ENCODE measurements at regions of chr10 and their contacts with region 1.

Region 1: GRCh38 chr10:8289241-8289924 is 234.9 kb downstream of the GATA3 start:
- DNase-seq: no peak
- CTCF ChIP-seq: no peak

Region 2: DNA sequence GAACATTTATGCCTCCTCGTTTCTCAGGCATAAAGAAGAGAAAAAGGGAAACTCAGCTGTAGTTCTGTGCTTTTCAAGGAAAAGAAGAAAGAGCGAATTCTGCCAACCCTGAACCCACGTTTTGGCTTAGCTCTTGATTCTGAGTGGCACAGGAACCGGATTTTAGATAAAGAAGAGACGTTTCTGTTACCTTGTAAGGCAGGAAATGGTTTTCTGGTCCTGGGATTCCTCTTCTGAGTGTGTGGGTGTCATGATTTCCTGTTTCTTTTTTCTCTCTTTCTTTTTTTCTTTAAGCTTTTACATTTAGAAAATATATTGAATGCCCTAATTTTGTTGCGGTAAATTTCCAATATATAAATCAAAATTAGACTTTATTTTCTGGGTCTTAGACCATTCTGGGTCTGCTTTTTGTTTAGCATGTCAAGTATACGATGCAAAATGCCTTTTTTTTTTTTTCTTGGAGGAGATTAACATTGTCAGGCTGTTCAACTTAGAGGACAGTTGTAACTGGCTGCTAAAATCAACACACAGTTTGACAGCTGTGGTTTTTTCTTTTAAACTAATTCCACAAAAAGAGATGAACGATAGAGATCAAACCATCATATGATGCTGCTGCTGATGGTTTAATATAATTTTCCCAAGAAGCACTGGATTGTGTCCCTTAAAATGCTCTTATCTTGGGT is 44.1 kb before region 1 on chr10:
- CTCF ChIA-PET with region 1: no interaction called
- POLR2A ChIA-PET with region 1: no interaction called
- DNase-seq: no peak
- CTCF ChIP-seq: no peak

Region 3: DNA sequence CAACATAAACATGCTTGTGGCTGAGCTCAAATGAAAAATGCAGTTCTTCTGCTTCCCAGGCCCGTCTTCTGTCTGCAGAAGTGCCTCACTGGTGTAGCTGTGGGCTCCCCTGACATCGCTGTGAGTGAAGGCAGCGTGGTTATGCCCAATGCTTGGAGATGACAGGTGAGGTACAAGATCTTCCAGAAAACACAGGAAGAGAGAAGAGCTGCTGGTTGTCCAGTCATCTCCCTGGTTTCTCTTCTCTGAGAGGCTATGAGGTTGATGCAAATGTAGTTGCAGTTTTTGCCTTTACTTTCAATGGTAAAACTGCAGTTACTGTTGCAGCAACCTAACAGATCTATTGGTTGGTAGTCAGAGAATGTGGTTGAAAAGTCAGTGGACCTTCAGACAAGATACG is 11.3 kb before region 1 on chr10:
- CTCF ChIA-PET with region 1: interaction called, 13 read pairs
- POLR2A ChIA-PET with region 1: no interaction called
- DNase-seq: no peak
- CTCF ChIP-seq: no peak

Measured in GM10248 (cell line).